B cell (primary cell): ENCODE measurements at regions of chr6 and their contacts with region 1.

Region 1: DNA sequence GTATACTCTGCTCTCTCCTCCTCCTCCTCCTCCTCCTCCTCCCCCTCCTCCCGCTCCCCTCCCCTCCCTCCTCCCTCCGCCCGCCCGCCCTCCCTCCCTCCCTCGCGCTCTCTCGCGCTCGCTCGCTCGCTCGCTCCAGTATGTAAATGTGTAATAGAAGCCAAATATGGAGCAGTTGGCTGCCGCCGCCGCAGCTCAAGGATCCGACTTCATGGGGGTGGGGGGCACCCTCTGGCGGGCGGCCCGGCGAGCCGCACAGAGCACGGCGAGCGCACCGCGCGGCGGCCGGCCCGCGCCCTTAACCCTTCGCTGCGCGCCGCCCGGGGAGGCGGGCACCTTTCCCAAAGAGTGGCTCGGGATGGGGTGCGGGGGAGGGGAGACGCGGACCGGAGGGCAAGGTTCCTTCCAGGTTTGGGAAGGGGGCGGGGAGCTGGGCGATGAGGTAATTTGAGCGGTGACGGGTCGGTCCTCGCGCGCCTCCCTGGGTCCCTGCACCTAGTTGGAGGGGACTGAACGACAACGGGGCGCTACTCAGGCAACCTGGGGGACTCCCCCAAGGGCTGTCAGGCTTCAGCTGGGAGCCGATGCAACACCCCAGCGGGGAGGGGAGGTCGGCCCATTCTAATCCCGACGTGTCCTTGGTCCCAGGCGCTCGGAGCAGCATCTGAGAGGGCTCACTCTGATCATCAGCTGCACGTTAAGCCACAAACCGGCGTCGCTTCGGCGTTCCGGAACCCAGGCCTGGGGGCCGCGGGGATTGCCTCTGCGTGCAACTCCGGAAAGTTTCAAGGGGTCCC is 409 bp upstream of the ATXN1 start:
- DNase-seq: peak; percentile 85
- ATAC-seq: peak; percentile 52
- H3K4me3 ChIP-seq: peak overlapping the region; percentile 56 to 85 (median 80)
- H3K4me3 Mint-ChIP-seq: peak overlapping the region; percentile 91
- H3K27ac ChIP-seq: peak overlapping the region; percentile 79 to 89
- H3K27ac Mint-ChIP-seq: peak overlapping the region; percentile 93
- H3K4me1 ChIP-seq: peaks cover 13 to 29% of the 10 kb centered on the region in 2 donors
- H3K4me1 Mint-ChIP-seq: peaks cover 38% of the 10 kb centered on the region
- H3K27me3 ChIP-seq: peaks cover 0 to 23% (median 5%) of the 10 kb centered on the region in 4 experiments
- H3K27me3 Mint-ChIP-seq: no peaks in the 10 kb centered on the region
- CTCF ChIP-seq: peak; percentile 18

Region 2: DNA sequence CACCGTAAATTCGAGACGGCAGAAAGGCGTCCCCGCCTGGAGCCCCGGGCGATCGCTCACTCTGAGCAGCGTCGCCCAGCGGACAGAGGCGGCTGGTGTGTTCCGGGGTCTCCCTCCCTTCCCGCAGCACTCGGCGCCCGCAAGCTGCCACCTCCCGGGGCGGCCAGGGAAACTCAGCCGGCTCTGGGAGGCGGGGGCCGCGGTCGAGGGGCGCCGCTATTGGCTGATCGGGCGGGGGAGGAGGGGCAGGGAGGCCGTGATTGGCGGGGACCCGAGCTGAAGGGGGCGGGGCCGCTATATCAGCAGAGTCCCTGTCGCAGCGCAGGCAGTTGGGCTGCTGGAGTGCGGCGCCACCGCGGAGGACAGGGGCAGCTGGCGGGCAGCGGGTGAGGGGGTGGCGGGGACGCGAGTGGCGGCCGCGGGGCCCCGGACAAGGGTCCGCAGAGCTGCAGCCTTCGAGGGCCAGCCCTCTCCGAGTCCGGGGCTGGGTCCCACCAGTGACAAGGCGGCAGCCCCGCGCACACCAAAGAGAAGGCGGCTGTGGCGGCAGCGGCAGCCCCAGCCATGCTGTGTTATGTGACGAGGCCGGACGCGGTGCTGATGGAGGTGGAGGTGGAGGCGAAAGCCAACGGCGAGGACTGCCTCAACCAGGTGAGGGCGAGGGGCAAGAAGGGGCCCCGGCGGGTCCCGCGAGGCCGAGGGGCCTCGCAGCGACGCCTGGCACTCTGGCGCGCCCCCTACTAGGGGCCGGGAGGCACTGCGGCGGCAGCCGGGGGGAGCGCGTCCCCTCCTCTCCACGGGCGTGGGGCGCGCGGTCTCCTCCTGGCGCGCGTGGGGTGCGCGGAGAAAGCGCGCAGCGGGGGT is 632.7 kb before region 1 on chr6 and contains the start of gene MYLIP:
- CTCF ChIA-PET with region 1: no interaction called
- POLR2A ChIA-PET with region 1: no interaction called
- intact Hi-C with region 1: loop called (anchors 10 kb)
- DNase-seq: peak; percentile 98
- ATAC-seq: peak; percentile 86
- H3K4me3 ChIP-seq: peak within 1 kb of the TSS; percentile 82 to 99 (median 94)
- H3K4me3 Mint-ChIP-seq: peak within 1 kb of the TSS; percentile 96
- H3K27ac ChIP-seq: peak within 1 kb of the TSS; percentile 92 to 95
- H3K27ac Mint-ChIP-seq: peak within 1 kb of the TSS; percentile 94
- H3K4me1 ChIP-seq: peaks cover 28 to 44% of the 10 kb centered on the region in 2 donors
- H3K4me1 Mint-ChIP-seq: peaks cover 50% of the 10 kb centered on the region
- H3K27me3 ChIP-seq: no peaks in the 10 kb centered on the region
- H3K27me3 Mint-ChIP-seq: peaks cover 6% of the 10 kb centered on the region
- CTCF ChIP-seq: peak; percentile 65
- total RNA-seq, gene MYLIP: 37.3 and 40.6 TPM in 2 replicates

Region 3: DNA sequence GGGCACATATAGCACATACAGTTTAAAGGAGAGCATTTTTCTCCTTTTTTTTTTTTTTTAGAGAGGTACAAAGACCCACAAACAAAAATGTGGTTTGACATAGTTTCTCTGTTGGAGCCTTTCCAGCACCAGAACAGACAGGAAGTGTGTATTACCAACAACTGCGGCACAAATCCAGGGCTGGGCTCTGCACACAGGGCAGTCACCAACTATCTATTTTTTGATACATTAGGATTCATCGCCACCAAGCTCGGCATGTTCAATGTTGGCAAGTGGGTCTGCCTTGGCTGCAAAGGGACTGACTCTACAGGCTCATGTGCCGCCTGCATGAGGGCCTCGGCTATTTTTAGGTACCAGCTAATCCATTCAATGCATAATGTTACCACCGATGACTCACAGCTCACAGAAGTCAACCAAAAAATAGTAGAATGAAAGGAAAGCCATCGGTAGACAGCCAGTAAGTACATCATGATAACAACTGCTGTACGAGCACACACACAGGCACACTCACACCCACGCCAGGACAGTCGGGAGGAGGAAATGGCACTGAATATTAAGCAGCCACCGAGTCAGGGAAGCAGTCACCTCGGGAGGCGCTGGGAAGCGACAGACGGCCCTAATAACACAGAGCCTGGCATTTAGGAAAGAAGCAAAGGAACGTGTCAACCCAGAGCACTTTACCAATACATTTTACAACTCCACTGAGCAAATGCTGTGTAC is 441.7 kb before region 1 on chr6:
- CTCF ChIA-PET with region 1: interaction called, 7 read pairs
- POLR2A ChIA-PET with region 1: interaction called, 3 read pairs
- intact Hi-C with region 1: loop called (anchors 2 kb)
- DNase-seq: peak; percentile 52
- ATAC-seq: peak; percentile 57
- H3K4me3 ChIP-seq: peak overlapping the region in 1 of 5 experiments; percentile 33
- H3K4me3 Mint-ChIP-seq: peak overlapping the region; percentile 53
- H3K27ac ChIP-seq: peak overlapping the region; percentile 6 to 23
- H3K27ac Mint-ChIP-seq: peak overlapping the region; percentile 62
- H3K4me1 ChIP-seq: peaks cover 17 to 34% of the 10 kb centered on the region in 2 donors
- H3K4me1 Mint-ChIP-seq: peaks cover 44% of the 10 kb centered on the region
- H3K27me3 ChIP-seq: no peaks in the 10 kb centered on the region
- H3K27me3 Mint-ChIP-seq: no peaks in the 10 kb centered on the region
- CTCF ChIP-seq: no peak

Region 4: DNA sequence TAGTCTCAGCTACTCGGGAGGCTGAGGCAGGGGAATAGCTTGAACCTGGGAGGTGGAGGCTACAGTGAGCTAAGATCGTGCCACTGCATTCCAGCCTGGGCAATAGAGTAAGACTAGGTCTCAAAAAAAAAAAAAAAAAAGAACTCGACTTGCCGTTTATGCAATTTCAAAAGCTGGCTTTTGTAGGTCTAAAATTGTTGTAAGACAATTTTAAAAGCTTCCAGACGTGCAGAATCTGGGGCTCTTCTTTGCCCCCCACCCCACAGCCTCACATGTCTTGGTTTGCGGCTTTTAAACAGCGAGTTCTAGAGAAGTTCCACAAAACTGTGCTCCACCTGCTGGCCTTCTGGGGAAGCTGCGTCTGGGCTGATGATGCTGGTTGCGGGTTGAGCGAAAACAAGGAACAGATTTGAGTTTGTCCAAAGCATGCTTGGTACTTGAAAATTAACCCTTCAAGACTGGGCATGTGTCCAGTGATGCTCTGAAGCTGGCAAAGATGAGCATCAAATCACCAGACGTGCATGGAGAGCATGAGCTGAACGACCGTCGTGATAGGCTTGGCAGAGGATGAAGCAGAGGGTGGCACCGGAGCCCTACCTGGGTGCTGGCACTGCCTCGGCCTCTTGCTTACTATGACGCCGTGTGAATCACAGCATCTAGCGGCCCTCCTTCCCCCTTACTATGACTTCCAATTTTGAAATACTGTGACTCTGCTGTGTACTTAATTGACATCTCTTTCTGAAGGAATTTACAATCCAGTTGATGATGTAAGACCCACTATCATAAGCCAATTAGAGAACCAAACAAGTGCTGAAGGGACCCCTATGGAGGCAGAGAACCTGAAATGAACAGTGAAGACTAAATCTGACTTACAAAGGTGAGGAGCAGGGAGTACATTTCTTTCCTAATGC is 351.9 kb before region 1 on chr6:
- CTCF ChIA-PET with region 1: interaction called, 13 read pairs
- POLR2A ChIA-PET with region 1: interaction called, 7 read pairs
- intact Hi-C with region 1: loop called (anchors 5 kb)
- DNase-seq: peak; percentile 75
- ATAC-seq: peak; percentile 64
- H3K4me3 ChIP-seq: no peak overlapping the region
- H3K4me3 Mint-ChIP-seq: peak overlapping the region; percentile 53
- H3K27ac ChIP-seq: no peak overlapping the region
- H3K27ac Mint-ChIP-seq: peak overlapping the region; percentile 66
- H3K4me1 ChIP-seq: peaks cover 10 to 50% of the 10 kb centered on the region in 2 donors
- H3K4me1 Mint-ChIP-seq: peaks cover 60% of the 10 kb centered on the region
- H3K27me3 ChIP-seq: no peaks in the 10 kb centered on the region
- H3K27me3 Mint-ChIP-seq: no peaks in the 10 kb centered on the region
- CTCF ChIP-seq: peak; percentile 77

Region 5: DNA sequence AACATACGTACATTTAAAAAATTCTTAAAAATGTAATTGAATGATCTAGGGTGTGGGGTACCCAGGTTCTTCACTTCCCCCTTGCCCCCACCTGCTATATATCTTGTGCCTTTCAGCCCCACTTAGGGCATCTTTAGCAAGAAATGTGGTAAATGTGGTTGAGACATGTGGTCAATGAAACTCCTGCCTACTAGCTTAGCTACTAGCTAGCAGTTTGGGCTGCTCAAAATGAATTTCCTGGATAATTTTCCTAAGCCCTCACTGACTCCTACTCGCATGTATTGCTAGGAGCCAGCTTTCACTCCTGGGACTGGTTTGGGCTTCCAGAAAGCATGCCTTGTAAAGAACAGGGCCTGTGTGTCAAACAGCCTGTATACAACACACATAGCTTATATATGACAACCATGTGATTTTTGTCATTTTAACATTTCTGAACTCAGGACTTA is 257.7 kb before region 1 on chr6:
- CTCF ChIA-PET with region 1: interaction called, 17 read pairs
- POLR2A ChIA-PET with region 1: interaction called, 3 read pairs
- intact Hi-C with region 1: no loop called
- DNase-seq: peak; percentile 57
- ATAC-seq: peak; percentile 66
- H3K4me3 ChIP-seq: no peak overlapping the region
- H3K4me3 Mint-ChIP-seq: peak overlapping the region; percentile 81
- H3K27ac ChIP-seq: no peak overlapping the region
- H3K27ac Mint-ChIP-seq: peak overlapping the region; percentile 90
- H3K4me1 ChIP-seq: peaks cover 12 to 14% of the 10 kb centered on the region in 2 donors
- H3K4me1 Mint-ChIP-seq: peaks cover 36% of the 10 kb centered on the region
- H3K27me3 ChIP-seq: no peaks in the 10 kb centered on the region
- H3K27me3 Mint-ChIP-seq: no peaks in the 10 kb centered on the region
- CTCF ChIP-seq: no peak

Region 6: DNA sequence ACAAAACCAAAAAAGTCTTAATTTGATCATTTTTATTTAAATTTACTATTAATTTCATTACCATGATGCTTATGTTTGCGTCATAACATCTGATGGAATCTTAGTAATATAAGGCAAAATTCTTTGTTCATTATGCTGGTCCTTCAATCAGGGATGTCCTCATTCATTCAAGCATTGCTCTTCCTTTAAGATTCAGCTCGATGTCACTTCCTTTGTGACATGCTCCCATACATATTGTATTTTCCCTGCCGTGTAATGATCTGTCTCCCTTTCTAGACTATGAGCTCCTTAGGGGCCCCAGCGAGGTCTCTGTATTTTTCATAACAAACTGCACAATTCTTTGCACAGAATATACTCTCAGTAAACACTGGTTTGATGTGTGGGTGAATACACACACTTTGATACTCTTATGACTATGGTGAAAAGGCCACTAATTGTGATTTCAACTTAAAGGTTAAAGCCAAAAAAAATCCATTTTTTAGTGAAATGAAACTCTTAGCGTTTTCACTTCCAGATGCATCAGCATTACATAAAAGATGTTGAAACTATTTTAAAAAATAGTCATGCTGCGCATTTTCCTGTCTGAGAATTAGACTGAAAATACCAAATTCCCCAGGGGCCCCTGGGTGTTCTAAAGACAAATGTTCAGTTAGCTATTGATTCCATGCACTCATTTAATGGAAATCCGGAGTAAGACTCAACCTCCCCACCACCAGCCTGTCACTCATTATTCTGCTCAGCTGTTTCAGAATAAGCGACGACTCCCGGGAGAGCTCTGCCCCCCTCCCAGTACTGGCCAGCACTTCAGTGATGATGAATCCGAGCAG is 170.1 kb before region 1 on chr6:
- CTCF ChIA-PET with region 1: interaction called, 7 read pairs
- POLR2A ChIA-PET with region 1: interaction called, 8 read pairs
- intact Hi-C with region 1: loop called (anchors 5 kb)
- DNase-seq: peak; percentile 53
- ATAC-seq: peak; percentile 72
- H3K4me3 ChIP-seq: no peak overlapping the region
- H3K4me3 Mint-ChIP-seq: peak overlapping the region; percentile 72
- H3K27ac ChIP-seq: peak overlapping the region; percentile 7 to 56
- H3K27ac Mint-ChIP-seq: peak overlapping the region; percentile 60
- H3K4me1 ChIP-seq: peaks cover 19 to 30% of the 10 kb centered on the region in 2 donors
- H3K4me1 Mint-ChIP-seq: peaks cover 55% of the 10 kb centered on the region
- H3K27me3 ChIP-seq: no peaks in the 10 kb centered on the region
- H3K27me3 Mint-ChIP-seq: no peaks in the 10 kb centered on the region
- CTCF ChIP-seq: no peak

Region 7: GRCh38 chr6:16741112-16742016 is 20.3 kb before region 1 on chr6:
- CTCF ChIA-PET with region 1: interaction called, 10 read pairs
- POLR2A ChIA-PET with region 1: no interaction called
- intact Hi-C with region 1: no loop called
- DNase-seq: no peak
- ATAC-seq: no peak
- H3K4me3 ChIP-seq: no peak overlapping the region
- H3K4me3 Mint-ChIP-seq: no peak overlapping the region
- H3K27ac ChIP-seq: no peak overlapping the region
- H3K27ac Mint-ChIP-seq: no peak overlapping the region
- H3K4me1 ChIP-seq: no peaks in the 10 kb centered on the region
- H3K4me1 Mint-ChIP-seq: peaks cover 3% of the 10 kb centered on the region
- H3K27me3 ChIP-seq: no peaks in the 10 kb centered on the region
- H3K27me3 Mint-ChIP-seq: peaks cover 5% of the 10 kb centered on the region
- CTCF ChIP-seq: no peak